ENCODE measurements at regions of chr6 and their contacts with region 1.

Region 1: GRCh38 chr6:73515204-73515655 is 5.6 kb downstream of the EEF1A1 start:
- DNase-seq: no peak
- ATAC-seq: no peak
- H3K4me3 Mint-ChIP-seq: no peak overlapping the region
- H3K27ac Mint-ChIP-seq: peak overlapping the region; percentile 98
- H3K4me1 Mint-ChIP-seq: peaks cover 48% of the 10 kb centered on the region
- H3K27me3 Mint-ChIP-seq: peaks cover 5% of the 10 kb centered on the region; the same call in 1 of the 2 replicates
- CTCF ChIP-seq: 0 out of 2 replicates have a peak, but pooled peaks have one; percentile 9

Region 2: GRCh38 chr6:73580247-73581149 is 65.3 kb after region 1 on chr6:
- CTCF ChIA-PET with region 1: interaction called, 4 read pairs
- POLR2A ChIA-PET with region 1: interaction called, 33 read pairs
- DNase-seq: peak; percentile 93
- ATAC-seq: peak; percentile 86
- H3K4me3 Mint-ChIP-seq: peak overlapping the region; percentile 57
- H3K27ac Mint-ChIP-seq: peak overlapping the region; percentile 97
- H3K4me1 Mint-ChIP-seq: peaks cover 55% of the 10 kb centered on the region
- H3K27me3 Mint-ChIP-seq: 0 out of 2 replicates have a peak, but pooled peaks cover 3% of the 10 kb centered on the region
- CTCF ChIP-seq: no peak

Region 3: DNA sequence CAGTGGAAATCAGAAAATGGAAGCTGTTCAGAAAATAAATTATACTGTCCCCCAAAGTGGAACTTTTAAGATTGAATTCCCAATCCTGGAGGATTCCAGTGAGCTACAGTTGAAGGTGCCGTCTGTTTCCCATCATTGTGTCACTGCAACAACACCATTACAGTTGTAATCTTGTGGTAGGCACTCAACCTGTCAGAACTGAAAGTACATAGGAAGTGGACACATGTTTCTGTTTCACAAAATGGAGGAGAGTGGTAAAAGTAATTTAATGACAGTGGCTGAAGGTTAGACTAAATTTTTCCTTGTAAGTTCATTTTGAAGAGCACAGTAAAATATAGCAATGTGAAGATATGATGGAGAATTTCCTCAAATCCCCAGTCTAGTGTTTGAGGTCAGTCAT is 250.8 kb after region 1 on chr6:
- CTCF ChIA-PET with region 1: no interaction called
- POLR2A ChIA-PET with region 1: interaction called, 11 read pairs
- DNase-seq: no peak
- ATAC-seq: no peak
- H3K4me3 Mint-ChIP-seq: no peak overlapping the region
- H3K27ac Mint-ChIP-seq: no peak overlapping the region
- H3K4me1 Mint-ChIP-seq: no peaks in the 10 kb centered on the region
- H3K27me3 Mint-ChIP-seq: no peaks in the 10 kb centered on the region
- CTCF ChIP-seq: no peak

Measured in WTC11 (cell line).